Activated CD4-positive, alpha-beta memory T cell treated with anti-CD3 and anti-CD28 coated beads, Interleukin-2, amount 10 ng/mL, durations not matched to agents 7 days and 5 days (primary cell): ENCODE measurements at regions of chr11 and their contacts with region 1.

Region 1: GRCh38 chr11:120682866-120683265 is 171.3 kb downstream of the GRIK4 start:
- DNase-seq: no peak
- H3K4me3 Mint-ChIP-seq: no peak overlapping the region
- H3K27ac Mint-ChIP-seq: no peak overlapping the region
- H3K4me1 Mint-ChIP-seq: no peaks in the 10 kb centered on the region
- H3K27me3 Mint-ChIP-seq: peaks cover 20% of the 10 kb centered on the region

Region 2: DNA sequence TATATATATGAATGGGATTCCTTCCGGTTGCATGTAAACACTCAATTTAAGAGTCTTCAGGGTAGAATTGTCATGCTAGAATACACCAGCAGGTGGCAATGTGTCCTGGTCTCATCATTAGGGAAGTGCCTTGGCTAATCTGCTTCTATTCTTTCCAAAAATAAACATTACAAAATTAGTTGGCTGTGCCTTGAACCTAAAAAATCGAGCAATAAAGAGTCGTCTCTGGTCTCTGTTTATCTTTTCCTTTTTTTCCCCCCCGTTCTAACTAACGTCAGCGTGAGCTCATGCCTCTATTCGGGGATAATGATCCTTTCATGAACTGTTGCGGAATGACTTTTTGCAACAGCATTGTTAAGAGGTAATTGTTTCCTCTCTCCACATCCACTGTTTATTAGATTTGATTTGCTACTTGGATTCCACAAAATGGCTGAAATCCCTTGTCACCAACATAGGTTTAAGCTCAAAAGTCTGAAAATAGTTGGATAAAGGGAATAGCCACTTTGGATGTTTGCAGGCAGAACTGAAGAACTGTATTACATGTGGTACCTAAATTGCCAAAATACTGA is 347.9 kb before region 1 on chr11:
- CTCF ChIA-PET with region 1: interaction called, 11 read pairs
- POLR2A ChIA-PET with region 1: no interaction called
- DNase-seq: peak; percentile 63
- H3K4me3 Mint-ChIP-seq: peak overlapping the region; percentile 59
- H3K27ac Mint-ChIP-seq: no peak overlapping the region
- H3K4me1 Mint-ChIP-seq: peaks cover 37% of the 10 kb centered on the region
- H3K27me3 Mint-ChIP-seq: peaks cover 50% of the 10 kb centered on the region

Region 3: GRCh38 chr11:120696597-120697218 is 13.8 kb after region 1 on chr11:
- CTCF ChIA-PET with region 1: interaction called, 10 read pairs
- POLR2A ChIA-PET with region 1: no interaction called
- DNase-seq: no peak
- H3K4me3 Mint-ChIP-seq: no peak overlapping the region
- H3K27ac Mint-ChIP-seq: no peak overlapping the region
- H3K4me1 Mint-ChIP-seq: no peaks in the 10 kb centered on the region
- H3K27me3 Mint-ChIP-seq: peaks cover 1% of the 10 kb centered on the region